ENCODE measurements at regions of chr3 and their contacts with region 1.

Region 1: GRCh38 chr3:196979545-196979944 is 10.9 kb upstream of the PIGZ start:
- DNase-seq: peak; percentile 57
- ATAC-seq: no peak
- H3K4me3 ChIP-seq: no peak overlapping the region
- H3K27ac ChIP-seq: no peak overlapping the region
- H3K4me1 ChIP-seq: no peaks in the 10 kb centered on the region
- H3K27me3 ChIP-seq: no peaks in the 10 kb centered on the region; the same call in 1 of the 2 replicates
- CTCF ChIP-seq: no peak
- POLR2A ChIP-seq: no peak
- RAD21 ChIP-seq: no peak

Region 2: DNA sequence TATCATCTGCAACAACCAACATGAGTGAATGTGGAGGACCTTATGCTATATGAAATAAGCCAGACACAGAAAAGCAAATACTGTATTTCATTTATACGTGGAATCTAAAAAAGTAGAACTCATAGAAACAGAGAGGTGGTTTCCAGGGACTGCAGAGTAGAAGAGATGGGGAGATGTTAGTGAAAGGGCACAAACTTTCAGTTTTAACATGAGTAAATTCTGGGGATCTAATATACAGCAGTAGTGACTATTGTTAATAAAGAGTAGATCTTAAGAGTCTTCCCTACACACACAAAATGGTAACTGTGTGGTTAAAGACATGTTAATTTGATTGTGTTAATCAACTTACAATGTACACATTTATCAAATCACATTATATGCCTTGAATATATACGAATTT is 71.0 kb after region 1 on chr3:
- CTCF ChIA-PET with region 1: no interaction called
- POLR2A ChIA-PET with region 1: no interaction called
- dilution Hi-C with region 1: no loop called
- in situ Hi-C with region 1: no loop called
- intact Hi-C with region 1: no loop called
- DNase-seq: no peak
- ATAC-seq: no peak
- H3K4me3 ChIP-seq: no peak overlapping the region
- H3K27ac ChIP-seq: no peak overlapping the region
- H3K4me1 ChIP-seq: no peaks in the 10 kb centered on the region
- H3K27me3 ChIP-seq: no peaks in the 10 kb centered on the region
- CTCF ChIP-seq: no peak
- POLR2A ChIP-seq: no peak
- RAD21 ChIP-seq: no peak

Region 3: DNA sequence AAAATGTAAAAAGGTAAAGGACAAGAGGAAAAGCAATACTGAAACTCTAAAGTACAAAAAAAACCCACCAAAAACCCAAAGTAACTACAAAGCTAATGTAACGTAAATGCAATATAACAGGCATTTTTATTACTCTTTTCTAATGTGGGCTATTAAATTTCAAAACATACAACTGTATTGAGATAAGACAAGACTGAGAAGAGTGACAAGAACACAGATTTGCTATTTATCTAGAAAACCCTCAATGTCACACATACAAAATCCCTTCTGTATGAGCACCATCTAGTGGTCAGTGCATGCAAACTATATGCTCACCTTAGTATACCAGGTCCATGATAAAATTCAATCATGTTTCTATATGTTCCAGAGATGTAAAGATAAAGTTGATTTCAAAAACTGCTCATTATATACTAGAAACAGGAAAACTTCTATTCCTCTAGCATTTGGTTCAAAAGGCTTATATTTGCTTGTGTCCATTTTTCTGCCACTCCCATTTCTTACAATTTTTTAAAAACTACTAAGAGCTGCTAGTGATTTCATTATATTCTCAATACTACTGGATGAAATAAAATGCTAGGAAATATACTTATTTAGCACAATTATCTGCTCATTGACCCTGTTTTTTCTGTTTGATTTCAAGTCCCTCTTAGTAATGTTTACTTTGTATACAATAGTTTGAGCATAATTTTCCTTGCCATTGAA is 207.5 kb after region 1 on chr3:
- CTCF ChIA-PET with region 1: no interaction called
- POLR2A ChIA-PET with region 1: no interaction called
- dilution Hi-C with region 1: no loop called
- in situ Hi-C with region 1: loop called (anchors 10 kb)
- intact Hi-C with region 1: loop called (anchors 1 kb)
- DNase-seq: peak; percentile 66
- ATAC-seq: peak; percentile 84
- H3K4me3 ChIP-seq: no peak overlapping the region
- H3K27ac ChIP-seq: no peak overlapping the region
- H3K4me1 ChIP-seq: peaks cover 4% of the 10 kb centered on the region
- H3K27me3 ChIP-seq: no peaks in the 10 kb centered on the region
- CTCF ChIP-seq: peak; percentile 82
- POLR2A ChIP-seq: no peak
- RAD21 ChIP-seq: peak; percentile 80

Measured in IMR-90 (cell line).